A549 (cell line): ENCODE measurements at regions of chr20 and their contacts with region 1.

Region 1: GRCh38 chr20:24662752-24663365 is 193.4 kb downstream of the SYNDIG1 start:
- DNase-seq: no peak
- ATAC-seq: no peak
- H3K4me3 ChIP-seq: no peak overlapping the region
- H3K27ac ChIP-seq: no peak overlapping the region
- H3K4me1 ChIP-seq: peaks cover under 1% of the 10 kb centered on the region; the same call in 1 of the 3 replicates
- CTCF ChIP-seq: no peak
- EP300 ChIP-seq: no peak
- POLR2A ChIP-seq: no peak
- RAD21 ChIP-seq: no peak

Region 2: GRCh38 chr20:24600046-24600445 is 62.8 kb before region 1 on chr20:
- CTCF ChIA-PET with region 1: no interaction called
- POLR2A ChIA-PET with region 1: no interaction called
- DNase-seq: no peak
- ATAC-seq: no peak
- H3K4me3 ChIP-seq: no peak overlapping the region
- H3K27ac ChIP-seq: no peak overlapping the region
- H3K4me1 ChIP-seq: no peaks in the 10 kb centered on the region
- CTCF ChIP-seq: no peak
- EP300 ChIP-seq: no peak
- POLR2A ChIP-seq: no peak
- RAD21 ChIP-seq: no peak

Region 3: DNA sequence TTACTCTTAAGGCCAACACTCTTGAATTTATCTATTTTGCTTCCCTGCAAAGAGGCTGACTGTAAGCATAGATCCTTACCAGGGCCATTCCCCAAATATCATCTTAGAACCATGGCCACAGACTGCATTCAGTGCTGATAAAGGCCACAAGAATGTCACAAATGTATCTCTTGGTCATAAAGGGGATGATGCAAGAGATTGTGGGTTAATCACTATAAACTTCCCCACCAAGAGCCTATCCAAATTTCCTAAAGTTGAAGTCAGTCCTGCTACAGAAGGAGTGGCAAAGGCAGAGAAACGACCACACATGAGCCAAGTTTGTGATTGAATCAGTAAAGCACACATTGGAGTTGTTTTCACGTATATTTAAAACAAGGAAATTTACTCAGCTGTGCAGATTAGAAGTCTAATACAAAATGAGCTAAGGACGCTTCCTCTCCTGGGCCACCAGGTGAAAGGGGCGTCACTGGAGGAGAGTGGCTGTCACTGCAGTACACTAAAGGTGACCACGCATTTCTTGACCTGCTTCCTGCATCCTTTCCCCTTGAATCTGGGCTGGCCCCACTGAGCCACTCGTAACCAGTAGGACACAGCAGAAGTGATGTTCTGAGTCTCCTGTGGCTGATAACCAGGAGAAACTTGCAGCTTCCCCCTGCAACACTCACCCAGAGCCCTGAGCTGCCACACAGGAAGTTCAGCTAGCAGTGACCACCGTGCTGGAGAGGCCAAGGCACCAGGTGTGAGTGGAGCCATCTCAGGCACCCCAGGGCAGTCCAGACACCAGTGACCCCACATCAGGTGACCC is 11.5 kb before region 1 on chr20:
- CTCF ChIA-PET with region 1: interaction called, 22 read pairs
- POLR2A ChIA-PET with region 1: no interaction called
- DNase-seq: peak; percentile 61 to 81
- ATAC-seq: peak; percentile 69 to 75
- H3K4me3 ChIP-seq: no peak overlapping the region
- H3K27ac ChIP-seq: peak overlapping the region; percentile 75 to 82
- H3K4me1 ChIP-seq: peaks cover 44% of the 10 kb centered on the region
- CTCF ChIP-seq: no peak
- EP300 ChIP-seq: peak; percentile 64 to 75; a peak in 2 of 5 replicates
- POLR2A ChIP-seq: no peak
- RAD21 ChIP-seq: peak; percentile 24 to 39; a peak in 4 of 5 replicates

Region 4: GRCh38 chr20:24672886-24673677 is 10.2 kb after region 1 on chr20:
- CTCF ChIA-PET with region 1: interaction called, 14 read pairs
- POLR2A ChIA-PET with region 1: no interaction called
- DNase-seq: peak; percentile 38 to 42
- ATAC-seq: peak; percentile 42 to 79
- H3K4me3 ChIP-seq: no peak overlapping the region
- H3K27ac ChIP-seq: peak overlapping the region; percentile 72 to 89
- H3K4me1 ChIP-seq: peaks cover 30% of the 10 kb centered on the region
- CTCF ChIP-seq: no peak
- EP300 ChIP-seq: 0 out of 5 replicates have a peak, but pooled peaks of 1 of the 2 experiments have one; percentile 27
- POLR2A ChIP-seq: no peak
- RAD21 ChIP-seq: no peak